ENCODE measurements at regions of chr10 and their contacts with region 1.

Region 1: GRCh38 chr10:14500172-14500765 is 169.5 kb upstream of the FRMD4A start:
- DNase-seq: no peak
- H3K4me3 ChIP-seq: no peak overlapping the region
- H3K4me3 Mint-ChIP-seq: no peak overlapping the region
- H3K27ac ChIP-seq: no peak overlapping the region
- H3K27ac Mint-ChIP-seq: peak overlapping the region in 4 of 7 donors; percentile 7 to 72 (median 38)
- H3K4me1 ChIP-seq: peaks cover 6% of the 10 kb centered on the region
- H3K4me1 Mint-ChIP-seq: peaks cover 5 to 12% (median 7%) of the 10 kb centered on the region in 4 donors
- H3K27me3 ChIP-seq: no peaks in the 10 kb centered on the region
- H3K27me3 Mint-ChIP-seq: peaks cover 0 to 2% of the 10 kb centered on the region in 2 donors

Region 2: GRCh38 chr10:14543046-14543903 is 43.0 kb after region 1 on chr10:
- CTCF ChIA-PET with region 1: interaction called, 32 read pairs
- POLR2A ChIA-PET with region 1: interaction called, 3 read pairs
- intact Hi-C with region 1: loop called (anchors 1 kb)
- DNase-seq: peak; percentile 55 to 79 (median 59)
- H3K4me3 ChIP-seq: no peak overlapping the region
- H3K4me3 Mint-ChIP-seq: peak overlapping the region; percentile 30 to 85 (median 70)
- H3K27ac ChIP-seq: peak overlapping the region; percentile 56
- H3K27ac Mint-ChIP-seq: peak overlapping the region; percentile 56 to 94 (median 85)
- H3K4me1 ChIP-seq: peaks cover 97% of the 10 kb centered on the region
- H3K4me1 Mint-ChIP-seq: peaks cover 73 to 96% (median 84%) of the 10 kb centered on the region in 4 donors
- H3K27me3 ChIP-seq: no peaks in the 10 kb centered on the region
- H3K27me3 Mint-ChIP-seq: no peaks in the 10 kb centered on the region

Region 3: DNA sequence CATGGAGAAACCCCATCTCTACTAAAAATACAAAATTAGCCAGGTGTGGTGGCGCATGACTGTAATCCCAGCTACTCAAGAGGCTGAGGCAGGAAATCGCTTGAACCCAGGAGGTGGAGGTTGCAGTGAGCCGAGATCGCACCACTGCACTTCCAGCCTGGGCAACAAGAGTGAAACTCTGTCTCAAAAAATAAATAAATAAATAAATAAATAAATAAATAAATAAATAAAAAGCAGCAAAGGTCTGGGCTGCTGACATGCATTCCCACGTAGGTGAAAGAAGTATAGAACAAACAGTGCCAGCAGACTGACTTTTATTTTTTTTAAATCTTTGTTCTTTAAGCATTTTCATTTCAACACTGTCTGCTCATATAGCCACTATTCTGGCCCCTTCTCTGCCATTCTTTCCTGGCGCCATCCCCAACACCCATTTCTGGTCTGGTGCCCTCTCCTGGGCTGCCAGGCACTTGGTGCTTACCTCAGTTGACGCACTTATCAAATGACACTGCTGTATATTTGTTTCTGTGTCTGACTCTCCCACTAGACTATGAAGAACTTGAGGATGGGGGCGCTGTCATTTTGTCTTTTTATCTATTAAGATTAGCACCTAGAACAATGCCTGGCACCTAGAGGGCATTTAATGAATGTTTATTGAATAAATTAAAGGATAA is 258.9 kb after region 1 on chr10:
- CTCF ChIA-PET with region 1: no interaction called
- POLR2A ChIA-PET with region 1: no interaction called
- intact Hi-C with region 1: loop called (anchors 1 kb)
- DNase-seq: peak in 3 of 5 donors; percentile 6 to 26 (median 18)
- H3K4me3 ChIP-seq: no peak overlapping the region
- H3K4me3 Mint-ChIP-seq: no peak overlapping the region
- H3K27ac ChIP-seq: no peak overlapping the region
- H3K27ac Mint-ChIP-seq: peak overlapping the region in 1 of 7 donors; percentile 18
- H3K4me1 ChIP-seq: no peaks in the 10 kb centered on the region
- H3K4me1 Mint-ChIP-seq: peaks cover 0 to 8% (median 5%) of the 10 kb centered on the region in 4 donors
- H3K27me3 ChIP-seq: no peaks in the 10 kb centered on the region
- H3K27me3 Mint-ChIP-seq: no peaks in the 10 kb centered on the region

Region 4: GRCh38 chr10:14971867-14972448 is 471.7 kb after region 1 on chr10:
- CTCF ChIA-PET with region 1: no interaction called
- POLR2A ChIA-PET with region 1: no interaction called
- intact Hi-C with region 1: loop called (anchors 1 kb)
- DNase-seq: peak in 4 of 5 donors; percentile 38 to 48 (median 44)
- H3K4me3 ChIP-seq: no peak overlapping the region
- H3K4me3 Mint-ChIP-seq: no peak overlapping the region
- H3K27ac ChIP-seq: no peak overlapping the region
- H3K27ac Mint-ChIP-seq: no peak overlapping the region
- H3K4me1 ChIP-seq: peaks cover 3% of the 10 kb centered on the region
- H3K4me1 Mint-ChIP-seq: peaks cover 0 to 6% (median 3%) of the 10 kb centered on the region in 4 donors
- H3K27me3 ChIP-seq: no peaks in the 10 kb centered on the region
- H3K27me3 Mint-ChIP-seq: peaks cover 13 to 21% of the 10 kb centered on the region in 2 donors

Region 5: DNA sequence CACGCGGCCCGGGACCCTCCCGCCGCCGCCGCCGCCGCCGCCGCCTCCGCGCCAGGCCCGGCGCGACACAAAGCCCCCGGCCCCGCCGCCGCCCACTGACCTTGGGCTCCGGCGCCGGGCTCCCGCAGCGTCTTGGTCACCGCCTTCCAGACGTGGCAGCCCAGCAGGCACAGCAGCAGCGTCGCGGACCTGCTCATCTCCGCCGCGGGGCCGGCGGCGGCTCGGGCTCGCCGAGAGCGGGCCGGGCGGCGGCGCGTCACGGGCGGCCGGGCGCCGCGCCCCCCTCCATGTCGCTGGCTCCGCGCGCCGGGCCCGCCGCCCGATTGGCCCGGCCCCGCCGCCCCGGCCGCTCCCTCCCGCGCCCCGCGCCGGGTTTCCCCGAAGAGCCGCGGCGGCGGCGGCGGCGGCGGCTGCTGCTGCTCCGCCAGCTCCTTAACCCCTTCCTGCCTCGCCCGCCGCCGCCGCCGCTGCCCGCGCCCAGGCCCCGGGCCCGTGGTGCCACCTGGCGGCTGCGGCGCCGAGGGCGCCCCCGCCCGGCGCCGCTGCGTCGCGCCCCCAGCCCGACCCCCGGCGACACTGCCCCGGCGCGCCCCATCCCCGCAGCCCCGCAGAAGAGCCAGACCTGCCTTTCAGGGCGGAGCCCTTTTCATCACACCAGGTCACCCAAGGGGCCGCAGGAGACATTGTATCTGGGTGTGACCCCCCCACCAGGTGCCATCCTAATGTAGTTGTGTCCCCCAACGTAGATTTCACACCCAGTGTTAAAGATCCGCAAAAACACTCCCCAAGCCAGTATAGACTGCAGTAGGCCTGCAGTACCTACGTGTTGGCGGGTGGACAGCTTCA is 870.8 kb after region 1 on chr10 and contains the start of gene FAM171A1:
- CTCF ChIA-PET with region 1: no interaction called
- POLR2A ChIA-PET with region 1: no interaction called
- intact Hi-C with region 1: loop called (anchors 5 kb)
- DNase-seq: peak; percentile 60 to 69 (median 68)
- H3K4me3 ChIP-seq: peak within 1 kb of the TSS in 1 of 2 donors; percentile 29
- H3K4me3 Mint-ChIP-seq: peak within 1 kb of the TSS; percentile 74 to 86 (median 80)
- H3K27ac ChIP-seq: no peak within 1 kb of the TSS
- H3K27ac Mint-ChIP-seq: peak within 1 kb of the TSS; percentile 35 to 88 (median 68)
- H3K4me1 ChIP-seq: peaks cover 10% of the 10 kb centered on the region
- H3K4me1 Mint-ChIP-seq: peaks cover 1 to 25% (median 11%) of the 10 kb centered on the region in 4 donors
- H3K27me3 ChIP-seq: no peaks in the 10 kb centered on the region
- H3K27me3 Mint-ChIP-seq: peaks cover 7 to 9% of the 10 kb centered on the region in 2 donors
- total RNA-seq, gene FAM171A1: 7.1 to 8.0 TPM

Measured in CD4-positive, alpha-beta memory T cell (primary cell).